Sigmoid colon (tissue), 7 donors: ENCODE measurements at regions of chr4 and their contacts with region 1.

Region 1: DNA sequence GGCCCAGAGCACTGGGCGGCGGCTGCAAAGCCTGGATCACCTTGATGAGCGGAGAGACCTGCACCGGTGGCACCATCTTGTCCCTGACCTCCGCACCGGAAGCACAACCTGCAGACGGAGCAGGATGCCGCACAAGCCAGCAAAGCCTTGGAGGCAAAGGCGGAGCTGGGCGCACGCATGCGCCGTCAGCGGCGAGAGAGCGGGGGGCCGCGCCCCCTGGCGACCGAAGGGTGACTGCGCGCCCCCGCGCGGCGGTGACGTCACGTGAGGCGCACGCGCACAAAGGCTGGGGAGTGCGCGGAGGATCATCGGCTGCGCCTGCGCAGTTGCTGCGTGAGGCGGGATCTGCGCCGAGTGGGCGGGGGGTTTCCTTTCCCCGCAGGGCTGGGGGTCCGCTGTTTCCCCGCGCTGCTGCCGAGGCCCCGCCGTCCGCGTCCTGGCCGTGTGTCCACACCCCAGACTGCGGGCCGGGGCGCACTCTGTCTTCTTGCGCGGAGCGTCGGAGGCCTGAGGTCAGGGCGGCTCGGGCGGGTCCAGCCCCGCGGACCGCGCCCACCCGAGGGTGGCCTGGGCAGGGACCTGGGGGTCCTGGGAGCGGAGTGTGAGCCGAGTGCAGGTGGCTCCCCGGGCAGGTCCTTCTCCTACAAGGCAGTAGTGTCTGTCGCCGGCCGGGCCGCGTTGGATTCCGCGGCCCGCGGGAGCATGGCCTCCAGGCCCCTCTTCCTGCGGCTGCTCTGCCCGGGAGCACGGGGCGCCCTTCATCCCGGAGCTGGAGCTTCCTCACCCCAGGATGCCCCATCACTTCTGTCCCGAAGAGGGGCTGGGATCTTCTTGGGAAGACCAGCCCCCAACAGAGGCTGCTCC is at the starts of genes ATP5ME and MYL5:
- DNase-seq: peak; percentile 99
- H3K4me3 ChIP-seq: peak within 1 kb of the TSS; percentile 84 to 100 (median 96)
- H3K27ac ChIP-seq: peak within 1 kb of the TSS; percentile 95 to 99 (median 97)
- H3K4me1 ChIP-seq: peaks cover 0 to 27% (median 19%) of the 10 kb centered on the region in 4 donors
- H3K27me3 ChIP-seq: peaks cover 5 to 12% (median 6%) of the 10 kb centered on the region in 3 donors
- CTCF ChIP-seq: peak; percentile 45 to 80 (median 68)
- EP300 ChIP-seq: no peak
- POLR2A ChIP-seq: peak; percentile 43 to 66
- total RNA-seq, gene ATP5ME: 104 to 244 (median 194) TPM
- total RNA-seq, gene MYL5: 5.7 to 11.7 (median 9.8) TPM

Region 2: GRCh38 chr4:337143-337931 is 337.1 kb before region 1 on chr4 and contains the start of gene ZNF141:
- intact Hi-C with region 1: loop called (anchors 5 kb)
- DNase-seq: peak; percentile 99
- H3K4me3 ChIP-seq: peak within 1 kb of the TSS; percentile 77 to 97 (median 90)
- H3K27ac ChIP-seq: peak within 1 kb of the TSS; percentile 88 to 99 (median 98)
- H3K4me1 ChIP-seq: peaks cover 0 to 28% (median 18%) of the 10 kb centered on the region in 4 donors
- H3K27me3 ChIP-seq: no peaks in the 10 kb centered on the region
- CTCF ChIP-seq: no peak
- EP300 ChIP-seq: peak in 3 of 4 donors; percentile 75 to 82 (median 76)
- POLR2A ChIP-seq: peak; percentile 69 to 89
- total RNA-seq, gene ZNF141: 17.4 to 24.4 (median 23.2) TPM

Region 3: GRCh38 chr4:498328-498904 is 176.0 kb before region 1 on chr4:
- intact Hi-C with region 1: loop called (anchors 10 kb)
- DNase-seq: no peak
- H3K4me3 ChIP-seq: peak overlapping the region; percentile 79 to 94 (median 86)
- H3K27ac ChIP-seq: peak overlapping the region; percentile 83 to 90 (median 88)
- H3K4me1 ChIP-seq: peaks cover 0 to 40% (median 23%) of the 10 kb centered on the region in 4 donors
- H3K27me3 ChIP-seq: no peaks in the 10 kb centered on the region
- CTCF ChIP-seq: no peak
- EP300 ChIP-seq: no peak
- POLR2A ChIP-seq: no peak

Region 4: GRCh38 chr4:637536-638280 is 36.7 kb before region 1 on chr4:
- intact Hi-C with region 1: no loop called
- DNase-seq: peak; percentile 46
- H3K4me3 ChIP-seq: no peak overlapping the region
- H3K27ac ChIP-seq: no peak overlapping the region
- H3K4me1 ChIP-seq: no peaks in the 10 kb centered on the region
- H3K27me3 ChIP-seq: peaks cover 0 to 23% (median 0%) of the 10 kb centered on the region in 3 donors
- CTCF ChIP-seq: no peak
- EP300 ChIP-seq: no peak
- POLR2A ChIP-seq: no peak

Region 5: GRCh38 chr4:705278-706082 is 31.1 kb after region 1 on chr4 and contains the start of gene PCGF3:
- intact Hi-C with region 1: loop called (anchors 2 kb)
- DNase-seq: peak; percentile 99
- H3K4me3 ChIP-seq: peak within 1 kb of the TSS; percentile 75 to 98 (median 89)
- H3K27ac ChIP-seq: peak within 1 kb of the TSS; percentile 74 to 86 (median 82)
- H3K4me1 ChIP-seq: peaks cover 0 to 35% (median 30%) of the 10 kb centered on the region in 4 donors
- H3K27me3 ChIP-seq: no peaks in the 10 kb centered on the region
- CTCF ChIP-seq: no peak
- EP300 ChIP-seq: no peak
- POLR2A ChIP-seq: no peak
- total RNA-seq, gene PCGF3: 26.4 to 60.1 (median 40.2) TPM

Region 6: DNA sequence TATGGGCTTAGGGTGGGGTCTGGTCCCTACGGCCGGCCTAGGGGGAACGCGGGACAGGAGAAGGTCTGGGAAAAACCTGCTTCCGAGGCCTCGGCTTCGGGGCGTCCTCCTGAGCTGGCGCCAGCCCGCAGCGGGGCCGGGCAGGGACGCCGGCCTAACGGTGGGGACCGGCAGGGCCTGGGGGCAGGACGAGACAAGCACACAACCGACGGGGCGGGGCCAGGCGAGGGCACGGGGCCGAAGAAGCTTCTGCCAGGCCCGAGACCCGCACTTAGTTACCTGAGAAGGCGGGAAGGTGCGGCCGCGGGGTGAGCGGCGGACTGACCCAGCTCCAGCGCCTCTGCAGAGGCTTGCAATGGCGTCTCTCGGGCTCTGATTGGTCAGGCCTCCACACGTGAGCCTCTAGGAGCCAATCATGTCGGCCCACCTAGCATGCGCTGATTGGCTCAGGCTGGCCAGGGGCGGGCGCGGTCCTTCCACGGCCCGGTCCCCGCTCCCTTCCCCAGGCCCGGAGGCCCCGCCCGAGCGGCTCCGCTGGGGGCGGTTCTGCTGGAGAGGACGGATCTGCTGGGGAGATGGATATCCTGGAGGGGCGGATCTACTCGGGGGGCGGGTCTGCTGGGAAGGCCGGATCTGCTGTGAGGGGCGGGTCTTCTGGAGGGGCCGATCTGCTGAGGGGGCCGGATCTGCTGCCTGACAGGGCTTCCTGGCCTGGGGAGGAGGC is 107.3 kb after region 1 on chr4:
- intact Hi-C with region 1: loop called (anchors 5 kb)
- DNase-seq: peak; percentile 99
- H3K4me3 ChIP-seq: peak overlapping the region; percentile 74 to 98 (median 92)
- H3K27ac ChIP-seq: peak overlapping the region; percentile 89 to 96 (median 94)
- H3K4me1 ChIP-seq: peaks cover 0 to 69% (median 49%) of the 10 kb centered on the region in 4 donors
- H3K27me3 ChIP-seq: peaks cover 19 to 25% (median 23%) of the 10 kb centered on the region in 3 donors
- CTCF ChIP-seq: no peak
- EP300 ChIP-seq: no peak
- POLR2A ChIP-seq: peak; percentile 91 to 96

Region 7: GRCh38 chr4:931960-932712 is 257.7 kb after region 1 on chr4 and contains the starts of genes GAK and TMEM175:
- intact Hi-C with region 1: loop called (anchors 10 kb)
- DNase-seq: peak; percentile 98
- H3K4me3 ChIP-seq: peak within 1 kb of the TSS; percentile 88 to 100 (median 98)
- H3K27ac ChIP-seq: peak within 1 kb of the TSS; percentile 89 to 95 (median 94)
- H3K4me1 ChIP-seq: peaks cover 0 to 48% (median 37%) of the 10 kb centered on the region in 4 donors
- H3K27me3 ChIP-seq: no peaks in the 10 kb centered on the region
- CTCF ChIP-seq: no peak
- EP300 ChIP-seq: no peak
- POLR2A ChIP-seq: peak; percentile 58 to 66
- total RNA-seq, gene GAK: 40.8 to 494 (median 60.4) TPM
- total RNA-seq, gene TMEM175: 19.3 to 42.6 (median 32.6) TPM